ENCODE measurements at regions of chr17 and their contacts with region 1.

Region 1: DNA sequence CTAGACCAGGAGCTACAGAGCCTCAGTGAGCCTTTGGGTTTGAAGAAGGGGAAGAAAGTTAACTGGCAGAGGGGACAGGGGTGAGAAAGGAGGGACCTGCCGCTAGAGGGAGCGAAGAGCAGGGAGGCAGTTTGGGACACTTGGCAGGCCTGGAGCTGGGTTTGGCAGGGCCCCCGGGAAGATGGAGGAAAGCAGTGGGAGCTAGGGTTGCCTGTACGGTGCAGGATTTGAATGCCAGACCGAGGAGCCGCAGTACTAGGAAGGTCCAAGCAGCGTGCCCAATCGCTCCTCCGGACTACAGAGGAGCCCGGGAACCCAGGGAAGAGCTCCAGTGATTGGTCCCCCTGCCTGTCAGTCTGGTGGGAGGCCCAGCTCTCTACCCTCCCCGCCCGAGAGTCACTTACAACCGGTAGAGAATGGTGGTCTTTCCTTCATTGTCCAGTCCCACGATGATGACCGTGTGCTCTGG is 1.3 kb downstream of the ARL5C start:
- DNase-seq: peak; percentile 90 to 96
- H3K4me3 ChIP-seq: peak overlapping the region; percentile 43 to 60
- H3K27ac ChIP-seq: peak overlapping the region in 1 of 2 donors; percentile 16
- H3K4me1 ChIP-seq: peaks cover 0 to 26% (median 13%) of the 10 kb centered on the region in 4 donors
- H3K27me3 ChIP-seq: no peaks in the 10 kb centered on the region
- CTCF ChIP-seq: peak; percentile 74 to 85

Region 2: GRCh38 chr17:38869526-38870258 is 295.0 kb before region 1 on chr17 and contains the start of gene LASP1:
- intact Hi-C with region 1: loop called (anchors 10 kb)
- DNase-seq: peak; percentile 89 to 94
- H3K4me3 ChIP-seq: peak within 1 kb of the TSS; percentile 77 to 96
- H3K27ac ChIP-seq: peak within 1 kb of the TSS; percentile 92 to 98
- H3K4me1 ChIP-seq: peaks cover 5 to 55% (median 39%) of the 10 kb centered on the region in 4 donors
- H3K27me3 ChIP-seq: no peaks in the 10 kb centered on the region
- CTCF ChIP-seq: no peak

Region 3: DNA sequence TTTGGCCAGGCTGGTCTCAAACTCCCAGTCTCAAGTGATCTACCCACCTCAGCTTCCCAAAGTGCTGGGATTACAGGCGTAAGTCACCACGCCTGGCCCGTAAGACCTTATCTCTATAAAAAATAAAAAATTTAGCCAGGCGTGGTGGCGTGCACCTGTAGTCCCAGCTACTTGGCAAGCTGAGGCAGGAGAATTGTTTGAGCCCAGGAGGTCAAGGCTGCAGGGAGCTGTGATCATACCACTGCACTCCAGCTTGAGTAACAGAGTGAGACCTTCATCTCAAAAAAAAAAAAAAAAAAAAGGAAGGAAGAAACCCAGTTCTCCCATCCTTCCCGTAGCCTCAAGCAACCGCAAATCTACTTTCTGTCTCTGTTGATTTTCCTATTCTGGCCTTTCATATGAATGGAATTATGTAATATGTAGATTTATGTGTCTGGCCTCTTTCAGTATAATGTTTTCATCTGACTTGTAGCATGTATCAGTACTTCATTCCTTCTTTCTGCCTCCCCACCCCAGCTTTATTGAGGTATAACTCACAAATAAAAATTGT is 986.8 kb after region 1 on chr17:
- intact Hi-C with region 1: no loop called
- DNase-seq: no peak
- H3K4me3 ChIP-seq: no peak overlapping the region
- H3K27ac ChIP-seq: no peak overlapping the region
- H3K4me1 ChIP-seq: peaks cover 0 to 43% (median 9%) of the 10 kb centered on the region in 4 donors
- H3K27me3 ChIP-seq: no peaks in the 10 kb centered on the region
- CTCF ChIP-seq: no peak

Measured in tibial artery (tissue), 4 donors.